GM13976 (cell line): ENCODE measurements at regions of chr11 and their contacts with region 1.

Region 1: GRCh38 chr11:124402326-124402922 is 3.6 kb upstream of the OR8B3 start:
- DNase-seq: peak; percentile 67
- CTCF ChIP-seq: peak; percentile 79

Region 2: GRCh38 chr11:124446916-124447315 is 44.5 kb after region 1 on chr11:
- in situ Hi-C with region 1: no loop called
- DNase-seq: no peak
- CTCF ChIP-seq: no peak

Region 3: DNA sequence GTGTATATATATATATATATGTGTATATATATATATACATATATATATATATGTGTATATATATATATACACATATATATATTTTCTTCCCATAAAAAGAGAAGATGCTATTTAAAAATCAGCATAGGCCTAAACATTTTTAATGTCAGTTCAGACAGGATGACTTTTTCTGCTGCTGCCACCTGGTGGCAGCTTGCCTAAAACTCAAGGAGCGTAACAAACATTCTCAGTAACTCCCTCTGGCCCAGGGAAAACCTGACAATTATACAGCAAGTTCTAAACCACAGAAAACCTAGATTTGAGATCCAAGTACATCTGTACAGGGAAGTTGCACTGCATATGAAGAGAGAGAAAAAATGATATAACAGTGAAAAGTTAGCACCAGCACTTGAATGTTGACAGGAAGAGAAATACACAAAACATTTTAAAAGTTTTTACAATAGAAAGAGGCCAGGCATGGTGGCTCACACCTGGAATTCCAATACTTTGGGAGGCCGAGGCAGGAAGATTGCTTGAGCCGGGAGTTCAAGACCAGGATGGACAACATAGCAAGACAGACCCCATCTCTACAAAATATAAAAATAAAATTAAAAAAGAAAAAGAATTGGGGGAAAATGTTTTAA is 183.9 kb after region 1 on chr11:
- in situ Hi-C with region 1: loop called (anchors 25 kb)
- DNase-seq: peak; percentile 38
- CTCF ChIP-seq: peak; percentile 72

Region 4: GRCh38 chr11:124633355-124633754 is 230.9 kb after region 1 on chr11:
- in situ Hi-C with region 1: no loop called
- DNase-seq: no peak
- CTCF ChIP-seq: no peak